Spleen (tissue), 13 donors: ENCODE measurements at regions of chr10 and their contacts with region 1.

Region 1: DNA sequence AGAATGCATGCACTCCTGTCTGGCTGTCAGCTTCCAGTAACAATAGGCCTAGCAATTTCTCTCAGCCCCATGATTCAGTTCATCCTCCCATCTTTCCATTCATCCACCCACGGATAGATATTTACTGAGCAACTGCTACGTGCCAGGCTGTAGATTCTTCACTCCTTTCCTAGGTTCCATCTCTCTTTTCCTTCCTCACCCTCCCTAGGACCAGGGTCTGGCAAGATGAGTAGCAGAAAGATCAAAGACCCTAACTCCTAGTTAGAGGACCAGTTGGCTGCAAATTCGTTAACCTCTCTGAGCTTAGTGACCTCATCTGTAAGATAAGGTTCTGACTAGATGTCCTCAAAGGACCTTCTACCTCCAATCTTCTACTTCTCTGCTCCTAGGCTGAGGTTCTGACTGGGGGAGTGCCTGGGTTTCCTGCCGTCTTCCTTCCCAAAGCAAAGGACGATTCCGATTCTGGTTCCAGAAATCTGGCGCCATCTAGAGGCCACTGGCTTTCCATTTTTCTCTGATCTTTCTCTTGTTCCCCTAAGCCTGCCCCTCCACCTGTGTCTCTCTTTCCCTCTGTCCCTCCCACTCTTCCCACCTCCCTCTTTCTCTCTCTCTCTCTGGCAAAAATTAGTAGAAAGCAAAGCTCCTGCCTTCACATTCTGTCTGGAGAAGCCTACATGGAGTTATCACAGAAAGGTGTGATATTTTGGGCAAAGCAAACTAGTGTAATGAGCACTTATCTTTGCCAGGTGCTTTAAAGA is 26.2 kb downstream of the TBATA start:
- DNase-seq: peak; percentile 75
- H3K4me3 ChIP-seq: no peak overlapping the region
- H3K27ac ChIP-seq: no peak overlapping the region
- H3K4me1 ChIP-seq: peaks cover 0 to 8% (median 0%) of the 10 kb centered on the region in 6 donors
- H3K27me3 ChIP-seq: peaks cover 0 to 13% (median 0%) of the 10 kb centered on the region in 7 donors
- CTCF ChIP-seq: peak; percentile 36 to 82 (median 70)
- POLR2A ChIP-seq: no peak

Region 2: GRCh38 chr10:70549962-70550458 is 208.9 kb before region 1 on chr10:
- intact Hi-C with region 1: loop called (anchors 2 kb)
- DNase-seq: peak; percentile 86
- H3K4me3 ChIP-seq: no peak overlapping the region
- H3K27ac ChIP-seq: no peak overlapping the region
- H3K4me1 ChIP-seq: peaks cover 0 to 5% (median 0%) of the 10 kb centered on the region in 6 donors
- H3K27me3 ChIP-seq: no peaks in the 10 kb centered on the region
- CTCF ChIP-seq: peak; percentile 73 to 92 (median 89)
- POLR2A ChIP-seq: no peak

Region 3: DNA sequence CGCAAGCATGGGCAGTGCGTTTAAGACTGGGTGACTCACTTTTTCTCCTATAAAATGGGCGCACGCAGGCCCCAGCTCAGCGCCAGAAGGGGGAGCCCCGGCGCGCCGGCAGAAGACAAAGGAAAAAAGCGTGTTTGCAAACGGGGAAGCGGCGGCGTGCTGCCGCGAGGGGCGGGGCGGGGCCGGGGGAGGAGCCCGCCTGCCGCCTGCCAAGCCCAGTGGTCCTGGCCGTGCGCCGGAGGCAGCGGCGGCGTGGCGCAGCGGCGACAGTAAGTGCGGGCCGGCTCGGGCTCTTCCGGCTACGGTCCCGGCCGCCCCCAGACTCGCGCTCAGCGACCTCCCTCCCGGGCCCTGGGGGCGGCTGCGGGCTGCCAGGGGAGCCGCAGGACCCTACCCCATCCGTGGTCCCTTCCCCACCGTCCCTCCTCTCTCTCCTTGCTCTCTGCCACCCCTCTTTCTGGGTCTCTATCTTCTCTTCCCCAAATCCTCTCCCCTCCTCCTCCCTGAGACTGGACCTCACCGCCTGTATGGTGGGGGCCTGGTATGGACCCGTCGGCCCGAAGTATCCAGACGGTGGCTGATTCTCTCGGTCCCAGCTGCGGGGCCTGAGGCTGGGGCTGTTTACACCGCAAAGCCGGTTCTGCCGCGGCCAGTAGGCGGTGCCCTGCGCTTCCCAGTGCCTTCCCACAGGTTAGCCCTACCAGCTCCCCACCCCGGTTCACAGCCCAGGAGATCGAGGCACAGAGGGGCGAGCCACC is 560.3 kb after region 1 on chr10 and contains the start of gene SLC29A3:
- intact Hi-C with region 1: no loop called
- DNase-seq: peak; percentile 95
- H3K4me3 ChIP-seq: peak within 1 kb of the TSS; percentile 51 to 84 (median 70)
- H3K27ac ChIP-seq: peak within 1 kb of the TSS; percentile 52 to 88 (median 80)
- H3K4me1 ChIP-seq: peaks cover 7 to 59% (median 33%) of the 10 kb centered on the region in 6 donors
- H3K27me3 ChIP-seq: no peaks in the 10 kb centered on the region
- CTCF ChIP-seq: peak; percentile 23 to 72 (median 61)
- POLR2A ChIP-seq: peak in 1 of 3 donors; percentile 60
- total RNA-seq, gene SLC29A3: 7.5 to 15.6 (median 9.3) TPM